Left ventricle myocardium superior (tissue), 1 donor: ENCODE measurements at regions of chr11 and their contacts with region 1.

Region 1: GRCh38 chr11:57798905-57799559 is 37.4 kb downstream of the CTNND1 start:
- DNase-seq: no peak
- ATAC-seq: peak; percentile 79

Region 2: GRCh38 chr11:57761301-57762234 is 37.5 kb before region 1 on chr11 and contains the start of gene CTNND1:
- intact Hi-C with region 1: loop called (anchors 5 kb)
- DNase-seq: peak; percentile 82
- ATAC-seq: peak; percentile 99
- total RNA-seq, gene CTNND1: 66.6 TPM

Region 3: DNA sequence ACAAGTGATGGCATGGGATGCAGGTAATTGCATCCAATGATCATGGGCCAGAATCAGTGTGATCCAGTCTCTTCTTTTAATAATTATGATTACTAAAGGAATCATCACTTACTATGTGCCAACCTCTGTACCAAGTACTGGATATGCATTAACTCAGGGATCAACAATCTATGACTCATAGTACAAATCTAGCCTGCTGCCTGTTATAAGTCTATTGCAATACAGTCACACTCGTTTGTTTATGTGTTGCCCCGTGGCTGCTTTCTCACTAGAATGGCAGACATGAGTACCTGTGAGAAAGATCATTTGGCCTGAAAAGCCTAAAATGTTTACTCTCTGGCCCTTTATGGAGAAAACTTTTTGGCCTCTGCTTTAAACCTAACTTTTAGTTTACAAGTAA is 276.7 kb after region 1 on chr11:
- intact Hi-C with region 1: no loop called
- DNase-seq: no peak
- ATAC-seq: no peak